Activated T-helper 1 cell treated with anti-CD3 and anti-CD28 coated beads, Interleukin-12 subunit alpha, Interleukin-12 subunit beta, Interleukin-2, Interleukin-4 antibody, amounts not matched to agents 30 ng/mL and 10 ng/mL and 1 ng/mL, durations not matched to agents 14 hours and 24 hours and 36 hours (primary cell): ENCODE measurements at regions of chr18 and their contacts with region 1.

Region 1: DNA sequence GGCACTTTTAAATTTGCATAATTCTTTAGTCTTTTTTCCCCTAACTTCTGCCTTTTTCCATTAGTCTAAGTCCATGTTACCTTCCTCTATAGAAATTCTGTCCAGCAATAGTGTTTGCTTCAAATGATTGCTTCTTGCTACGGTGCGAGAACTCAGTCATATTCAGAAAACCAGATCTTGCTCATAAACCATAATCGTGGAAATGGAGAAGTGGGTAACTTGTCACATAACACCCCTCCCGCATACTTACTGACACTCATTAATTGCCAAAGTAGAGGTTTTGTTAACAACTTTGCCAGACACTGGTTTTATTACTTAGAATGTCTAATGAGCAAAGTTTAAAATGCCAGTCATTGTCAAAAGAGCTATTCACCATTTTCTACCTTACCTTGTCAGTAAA is 94.3 kb upstream of the TWSG1 start:
- DNase-seq: no peak
- H3K4me3 Mint-ChIP-seq: no peak overlapping the region
- H3K27ac Mint-ChIP-seq: no peak overlapping the region
- H3K4me1 Mint-ChIP-seq: peaks cover 7% of the 10 kb centered on the region
- H3K27me3 Mint-ChIP-seq: no peaks in the 10 kb centered on the region

Region 2: DNA sequence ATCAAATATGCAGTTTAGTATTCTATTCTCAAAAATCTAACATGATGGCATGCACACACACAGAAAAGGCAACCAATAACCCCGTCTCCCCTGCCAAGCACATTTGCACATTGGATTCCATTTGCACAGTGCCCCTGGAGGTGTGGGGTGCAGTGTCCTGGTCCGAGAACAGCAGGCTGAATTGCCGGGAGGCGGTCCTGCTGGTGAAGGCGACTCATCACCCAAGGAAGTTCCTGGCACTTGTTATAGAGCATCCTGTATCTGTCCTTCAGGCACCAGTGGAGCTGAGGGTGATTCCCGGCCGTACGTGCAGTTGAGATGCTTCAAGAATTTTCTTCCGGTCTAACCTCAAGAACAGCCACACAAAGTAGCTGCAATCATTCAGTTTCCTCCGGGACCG is 704.0 kb before region 1 on chr18:
- intact Hi-C with region 1: no loop called
- DNase-seq: no peak
- H3K4me3 Mint-ChIP-seq: no peak overlapping the region
- H3K27ac Mint-ChIP-seq: no peak overlapping the region
- H3K4me1 Mint-ChIP-seq: no peaks in the 10 kb centered on the region
- H3K27me3 Mint-ChIP-seq: no peaks in the 10 kb centered on the region

Region 3: GRCh38 chr18:9191658-9192256 is 48.5 kb before region 1 on chr18:
- intact Hi-C with region 1: no loop called
- DNase-seq: no peak
- H3K4me3 Mint-ChIP-seq: no peak overlapping the region
- H3K27ac Mint-ChIP-seq: no peak overlapping the region
- H3K4me1 Mint-ChIP-seq: peaks cover 15% of the 10 kb centered on the region
- H3K27me3 Mint-ChIP-seq: no peaks in the 10 kb centered on the region

Region 4: DNA sequence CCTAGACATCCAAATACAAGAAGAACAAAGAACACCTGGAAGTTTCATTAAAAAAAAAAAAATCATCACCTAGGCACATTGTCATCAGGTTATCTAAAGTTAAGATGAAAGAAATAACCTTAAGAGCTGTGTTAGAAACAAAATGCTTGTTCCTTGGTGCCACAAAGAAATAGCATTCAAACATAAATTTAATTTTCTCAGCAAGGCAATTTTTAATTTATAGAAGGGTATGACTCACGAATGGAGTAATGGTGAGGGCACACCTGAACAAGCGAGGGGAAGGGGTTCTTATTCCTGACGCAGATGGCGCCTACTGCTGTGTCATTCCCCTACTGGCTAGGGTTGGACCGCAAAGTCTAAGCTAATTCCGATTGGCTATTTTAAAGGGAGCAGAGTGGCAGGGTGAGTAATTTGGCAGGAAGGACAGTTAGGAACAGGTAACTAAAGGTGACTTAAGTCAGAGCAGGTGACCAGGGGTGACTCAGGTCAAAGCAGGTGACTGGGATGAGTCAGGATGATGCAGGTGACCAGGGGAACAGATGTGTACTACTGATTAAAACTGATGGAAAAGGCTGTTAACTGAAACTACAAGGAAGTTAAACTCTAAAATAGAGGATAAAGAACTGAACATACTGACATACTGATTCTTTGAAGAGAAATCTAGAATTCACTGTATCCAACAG is 64.3 kb after region 1 on chr18:
- intact Hi-C with region 1: loop called (anchors 10 kb)
- DNase-seq: no peak
- H3K4me3 Mint-ChIP-seq: no peak overlapping the region
- H3K27ac Mint-ChIP-seq: no peak overlapping the region
- H3K4me1 Mint-ChIP-seq: no peaks in the 10 kb centered on the region
- H3K27me3 Mint-ChIP-seq: no peaks in the 10 kb centered on the region